Mammary epithelial cell (primary cell): ENCODE measurements at regions of chr9 and their contacts with region 1.

Region 1: DNA sequence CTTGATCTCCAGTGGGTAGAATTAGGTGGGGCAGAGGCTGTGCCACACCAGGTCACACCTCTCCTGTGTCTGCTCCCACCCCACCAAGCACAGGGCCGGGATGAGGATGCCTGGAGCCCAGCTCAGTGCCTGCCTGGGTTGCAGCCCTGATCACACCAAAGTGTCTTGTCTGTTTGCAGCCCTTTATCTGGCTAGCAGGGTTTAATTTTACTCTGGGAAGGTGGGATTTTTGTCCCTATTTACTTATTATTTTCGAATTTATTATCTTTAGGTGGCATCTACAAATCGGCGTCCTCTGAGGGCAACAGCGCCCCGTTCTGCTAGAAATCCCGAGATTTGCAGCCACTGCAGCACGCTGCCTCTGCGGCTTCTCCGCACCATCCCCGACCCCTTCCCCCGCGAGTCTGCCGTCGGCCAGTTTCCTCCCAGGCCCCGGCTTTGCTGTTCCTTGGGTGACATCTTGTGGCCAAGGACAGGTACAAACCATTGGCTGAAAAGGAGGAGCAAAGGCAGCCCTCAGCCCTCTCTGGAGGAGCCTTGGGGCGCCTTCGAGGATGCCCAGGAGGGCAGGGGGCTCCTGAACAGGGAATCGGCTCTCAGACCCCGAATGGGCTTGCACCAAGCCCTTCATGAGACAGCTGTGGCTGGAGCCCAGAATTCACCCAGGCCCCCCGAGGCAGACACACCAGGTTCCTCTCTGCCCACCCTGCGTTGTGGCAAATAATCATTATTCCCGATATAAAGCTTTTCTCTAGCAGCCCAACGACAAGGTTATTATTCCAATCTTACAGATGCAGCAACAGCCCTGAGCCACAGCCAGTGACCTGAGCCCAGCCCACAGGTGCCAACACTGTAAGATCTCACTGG is 113.0 kb downstream of the GAPVD1 start:
- DNase-seq: peak; percentile 37
- H3K4me3 ChIP-seq: peak overlapping the region; percentile 18 to 50 (median 35)
- H3K27ac ChIP-seq: no peak overlapping the region
- H3K4me1 ChIP-seq: no peaks in the 10 kb centered on the region
- H3K27me3 ChIP-seq: no peaks in the 10 kb centered on the region
- CTCF ChIP-seq: peak; percentile 59 to 86

Region 2: DNA sequence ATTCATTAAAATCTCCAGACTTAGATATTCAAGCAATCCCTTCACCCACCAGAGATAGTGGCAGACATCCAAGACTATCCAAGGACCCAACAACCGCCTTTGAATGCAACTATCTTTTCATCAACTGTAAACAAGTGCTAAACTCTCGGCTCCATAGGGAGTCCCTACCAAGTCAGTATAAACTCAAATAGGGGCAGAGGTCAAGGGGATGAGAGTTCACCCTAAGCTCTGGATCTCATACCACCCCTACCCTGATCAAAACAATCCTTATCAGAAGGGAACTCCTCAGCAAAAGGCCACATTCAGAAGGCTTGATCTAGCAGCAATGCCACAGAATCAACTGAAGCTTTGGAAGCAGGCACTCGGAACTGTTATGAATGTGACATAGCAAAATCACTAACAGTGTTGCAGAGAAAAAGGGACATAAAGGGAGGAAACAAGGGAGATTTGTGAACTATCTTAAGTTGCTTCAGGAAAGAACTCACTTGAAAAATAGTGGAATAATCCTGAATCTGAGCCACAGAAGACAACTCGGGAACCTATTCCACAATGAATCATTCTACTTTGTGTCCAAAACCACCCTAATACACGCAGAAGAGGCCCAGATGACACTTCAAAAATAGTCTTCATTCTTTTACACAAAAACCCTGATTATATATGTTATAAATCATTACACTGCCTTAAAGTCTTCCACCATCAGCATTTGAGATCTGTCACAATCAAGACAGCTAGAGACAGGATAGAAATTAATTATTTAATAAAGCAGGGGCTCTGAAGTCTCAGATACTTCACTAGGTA is 653.4 kb before region 1 on chr9:
- CTCF ChIA-PET with region 1: interaction called, 7 read pairs
- dilution Hi-C with region 1: no loop called
- in situ Hi-C with region 1: no loop called
- intact Hi-C with region 1: loop called (anchors 10 kb)
- DNase-seq: no peak
- H3K4me3 ChIP-seq: no peak overlapping the region
- H3K27ac ChIP-seq: no peak overlapping the region
- H3K4me1 ChIP-seq: peaks cover 6% of the 10 kb centered on the region
- H3K27me3 ChIP-seq: no peaks in the 10 kb centered on the region
- CTCF ChIP-seq: no peak

Region 3: GRCh38 chr9:124861342-124862229 is 513.1 kb before region 1 on chr9 and contains the starts of genes ARPC5L and RPL35:
- CTCF ChIA-PET with region 1: no interaction called
- dilution Hi-C with region 1: no loop called
- in situ Hi-C with region 1: no loop called
- intact Hi-C with region 1: loop called (anchors 2 kb)
- DNase-seq: peak; percentile 93
- H3K4me3 ChIP-seq: peak within 1 kb of the TSS; percentile 47 to 88 (median 87)
- H3K27ac ChIP-seq: peak within 1 kb of the TSS; percentile 60
- H3K4me1 ChIP-seq: peaks cover 48% of the 10 kb centered on the region
- H3K27me3 ChIP-seq: no peaks in the 10 kb centered on the region
- CTCF ChIP-seq: peak in 1 of 2 donors; percentile 35
- total RNA-seq, gene ARPC5L: 21.2 to 79.8 TPM
- total RNA-seq, gene RPL35: 1,457 to 1,657 TPM

Region 4: GRCh38 chr9:124940693-124941453 is 433.8 kb before region 1 on chr9 and contains the start of gene GOLGA1:
- CTCF ChIA-PET with region 1: no interaction called
- dilution Hi-C with region 1: no loop called
- in situ Hi-C with region 1: no loop called
- intact Hi-C with region 1: loop called (anchors 5 kb)
- DNase-seq: peak; percentile 95
- H3K4me3 ChIP-seq: peak within 1 kb of the TSS; percentile 86 to 100 (median 88)
- H3K27ac ChIP-seq: peak within 1 kb of the TSS; percentile 87
- H3K4me1 ChIP-seq: peaks cover 11% of the 10 kb centered on the region
- H3K27me3 ChIP-seq: no peaks in the 10 kb centered on the region
- CTCF ChIP-seq: no peak
- total RNA-seq, gene GOLGA1: 11.5 to 17.6 TPM

Region 5: DNA sequence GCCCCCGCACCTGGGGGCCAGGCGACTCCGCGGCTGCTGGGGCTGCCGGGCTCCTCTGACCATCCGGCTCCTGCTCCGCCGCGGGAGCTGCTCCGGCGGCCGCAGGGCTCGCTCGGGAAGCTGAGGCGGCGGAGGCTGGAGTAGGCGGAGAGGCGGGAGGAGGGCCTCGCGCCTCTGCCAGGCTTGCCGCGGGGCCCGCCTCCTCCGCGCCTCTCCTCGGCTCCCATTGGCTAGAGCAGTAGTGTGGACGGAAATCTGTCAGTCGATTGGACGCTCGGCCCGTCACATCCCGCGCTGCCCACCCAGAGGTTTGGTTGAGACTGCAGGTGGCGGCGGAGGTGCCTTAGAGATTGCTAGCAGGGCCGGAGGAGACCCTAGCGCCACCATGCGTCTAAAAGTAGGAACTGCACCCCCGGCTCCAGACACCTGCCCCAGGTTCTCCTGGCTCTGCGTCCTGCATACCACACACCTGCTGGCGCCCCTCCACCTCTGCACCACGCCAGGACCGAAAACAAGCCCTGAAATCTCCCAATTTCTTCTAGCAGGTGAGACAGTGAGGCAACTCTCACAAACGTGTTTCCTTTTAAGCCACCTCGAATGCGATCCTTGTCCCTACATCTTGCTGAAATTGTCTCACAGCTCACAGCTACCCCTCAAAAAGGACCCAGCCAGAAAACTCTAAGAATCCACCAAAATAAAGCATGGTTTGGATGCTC is 231.1 kb before region 1 on chr9 and contains the start of gene SCAI:
- CTCF ChIA-PET with region 1: no interaction called
- dilution Hi-C with region 1: no loop called
- in situ Hi-C with region 1: no loop called
- intact Hi-C with region 1: loop called (anchors 1 kb)
- DNase-seq: peak; percentile 98
- H3K4me3 ChIP-seq: peak within 1 kb of the TSS; percentile 38 to 67 (median 59)
- H3K27ac ChIP-seq: no peak within 1 kb of the TSS
- H3K4me1 ChIP-seq: peaks cover 10% of the 10 kb centered on the region
- H3K27me3 ChIP-seq: no peaks in the 10 kb centered on the region
- CTCF ChIP-seq: peak; percentile 83 to 98
- total RNA-seq, gene SCAI: 3.1 to 7.7 TPM

Region 6: DNA sequence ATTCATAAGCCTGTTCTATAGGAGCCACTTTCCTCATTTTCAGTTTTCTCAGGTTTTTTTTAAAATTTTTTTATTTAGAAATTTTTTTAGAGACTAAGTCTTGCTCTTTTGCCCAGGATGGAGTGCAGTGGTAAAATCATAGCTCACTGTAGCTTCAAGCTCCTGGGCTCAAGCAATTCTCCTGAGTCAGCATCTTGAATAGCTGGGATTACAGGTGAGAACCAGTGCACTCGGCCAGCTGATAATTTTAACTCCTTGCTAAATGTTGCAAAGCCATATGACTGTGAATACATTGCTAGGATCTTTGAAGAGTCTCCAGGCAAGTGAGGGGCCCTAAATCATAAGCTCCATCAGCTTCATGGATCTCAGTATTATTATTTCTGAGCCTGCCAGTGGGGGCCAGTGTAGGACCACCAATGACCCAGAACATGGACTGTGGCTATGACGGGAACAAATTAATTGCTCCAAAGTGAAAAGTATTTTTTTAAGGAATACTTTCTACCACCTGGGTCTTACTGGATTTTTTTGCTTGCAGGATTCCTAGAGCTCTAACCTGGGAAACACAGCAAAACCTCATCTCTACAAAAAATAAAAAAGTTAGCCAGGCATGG is 118.8 kb before region 1 on chr9:
- CTCF ChIA-PET with region 1: interaction called, 3 read pairs
- dilution Hi-C with region 1: no loop called
- in situ Hi-C with region 1: no loop called
- intact Hi-C with region 1: loop called (anchors 1 kb)
- DNase-seq: no peak
- H3K4me3 ChIP-seq: no peak overlapping the region
- H3K27ac ChIP-seq: no peak overlapping the region
- H3K4me1 ChIP-seq: no peaks in the 10 kb centered on the region
- H3K27me3 ChIP-seq: no peaks in the 10 kb centered on the region
- CTCF ChIP-seq: peak; percentile 24 to 31

Region 7: GRCh38 chr9:125332527-125332926 is 42.1 kb before region 1 on chr9:
- CTCF ChIA-PET with region 1: no interaction called
- dilution Hi-C with region 1: loop called (anchors 5 kb)
- in situ Hi-C with region 1: no loop called
- intact Hi-C with region 1: no loop called
- DNase-seq: no peak
- H3K4me3 ChIP-seq: no peak overlapping the region
- H3K27ac ChIP-seq: no peak overlapping the region
- H3K4me1 ChIP-seq: peaks cover 15% of the 10 kb centered on the region
- H3K27me3 ChIP-seq: no peaks in the 10 kb centered on the region
- CTCF ChIP-seq: no peak